Calu3 (cell line): ENCODE measurements at regions of chr12 and their contacts with region 1.

Region 1: GRCh38 chr12:88153959-88154358 is 11.9 kb downstream of the TMTC3 start:
- DNase-seq: peak; percentile 16
- H3K4me3 Mint-ChIP-seq: no peak overlapping the region
- H3K27ac Mint-ChIP-seq: no peak overlapping the region
- H3K4me1 Mint-ChIP-seq: no peaks in the 10 kb centered on the region
- H3K27me3 Mint-ChIP-seq: no peaks in the 10 kb centered on the region
- CTCF ChIP-seq: peak; percentile 54

Region 2: DNA sequence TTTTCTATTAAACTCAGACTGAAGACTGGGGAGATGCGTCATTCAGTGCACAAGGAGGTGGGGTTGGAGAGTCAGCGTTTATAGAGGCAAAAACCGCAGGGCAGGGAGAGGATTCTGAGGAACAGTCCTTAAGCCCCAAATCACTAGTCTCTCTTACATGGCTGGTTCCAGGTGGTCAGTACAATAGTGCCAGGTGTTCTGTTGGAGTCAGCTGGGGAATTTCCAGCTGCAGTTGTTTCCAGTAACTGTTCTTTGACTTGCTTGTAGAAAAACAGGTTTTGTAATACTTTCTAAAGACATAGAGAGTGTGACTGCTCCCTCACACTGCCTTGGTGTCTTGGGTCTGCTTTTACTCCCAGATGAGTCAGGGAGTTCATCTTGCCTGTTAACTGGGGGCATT is 180.3 kb after region 1 on chr12:
- CTCF ChIA-PET with region 1: no interaction called
- intact Hi-C with region 1: no loop called
- DNase-seq: peak; percentile 36
- H3K4me3 Mint-ChIP-seq: no peak overlapping the region
- H3K27ac Mint-ChIP-seq: no peak overlapping the region
- H3K4me1 Mint-ChIP-seq: peaks cover 24% of the 10 kb centered on the region
- H3K27me3 Mint-ChIP-seq: no peaks in the 10 kb centered on the region
- CTCF ChIP-seq: no peak

Region 3: DNA sequence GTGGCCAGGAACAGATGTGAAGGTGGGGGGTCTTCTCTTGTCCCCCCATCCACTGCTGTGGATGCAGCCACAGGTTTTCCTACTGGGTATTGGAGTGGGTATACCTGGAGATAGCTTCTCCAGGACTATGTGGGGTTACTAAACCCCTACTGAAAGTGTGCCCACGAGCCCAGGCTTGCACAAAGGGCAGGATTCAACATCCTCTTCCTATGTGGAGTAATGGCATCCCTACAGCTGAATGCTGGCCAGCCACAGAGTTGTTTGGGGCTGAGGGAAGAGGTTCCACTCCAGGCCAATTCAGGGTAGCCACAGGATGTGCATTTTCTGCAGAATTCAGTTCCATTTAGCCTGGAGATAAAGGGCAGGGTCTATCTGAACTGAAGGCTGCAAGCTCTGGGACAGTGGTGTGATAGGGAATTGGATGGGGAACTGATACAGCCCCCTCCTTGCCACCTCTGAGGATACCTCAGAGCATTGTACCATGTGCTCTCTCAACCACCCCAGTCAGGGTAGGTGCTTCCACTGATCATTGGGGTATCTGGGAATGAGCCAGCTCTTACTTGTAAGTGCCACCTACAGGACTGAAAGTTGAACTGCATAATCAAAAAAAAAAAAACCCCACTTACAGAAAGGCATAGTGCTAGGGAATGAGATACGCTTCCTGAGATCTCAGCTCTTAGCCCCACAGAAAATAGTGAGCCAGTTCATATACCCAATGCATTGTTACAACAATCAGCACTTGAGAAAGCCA is 239.2 kb after region 1 on chr12:
- CTCF ChIA-PET with region 1: no interaction called
- intact Hi-C with region 1: loop called (anchors 5 kb)
- DNase-seq: peak; percentile 14
- H3K4me3 Mint-ChIP-seq: no peak overlapping the region
- H3K27ac Mint-ChIP-seq: no peak overlapping the region
- H3K4me1 Mint-ChIP-seq: no peaks in the 10 kb centered on the region
- H3K27me3 Mint-ChIP-seq: no peaks in the 10 kb centered on the region
- CTCF ChIP-seq: peak; percentile 57

Region 4: DNA sequence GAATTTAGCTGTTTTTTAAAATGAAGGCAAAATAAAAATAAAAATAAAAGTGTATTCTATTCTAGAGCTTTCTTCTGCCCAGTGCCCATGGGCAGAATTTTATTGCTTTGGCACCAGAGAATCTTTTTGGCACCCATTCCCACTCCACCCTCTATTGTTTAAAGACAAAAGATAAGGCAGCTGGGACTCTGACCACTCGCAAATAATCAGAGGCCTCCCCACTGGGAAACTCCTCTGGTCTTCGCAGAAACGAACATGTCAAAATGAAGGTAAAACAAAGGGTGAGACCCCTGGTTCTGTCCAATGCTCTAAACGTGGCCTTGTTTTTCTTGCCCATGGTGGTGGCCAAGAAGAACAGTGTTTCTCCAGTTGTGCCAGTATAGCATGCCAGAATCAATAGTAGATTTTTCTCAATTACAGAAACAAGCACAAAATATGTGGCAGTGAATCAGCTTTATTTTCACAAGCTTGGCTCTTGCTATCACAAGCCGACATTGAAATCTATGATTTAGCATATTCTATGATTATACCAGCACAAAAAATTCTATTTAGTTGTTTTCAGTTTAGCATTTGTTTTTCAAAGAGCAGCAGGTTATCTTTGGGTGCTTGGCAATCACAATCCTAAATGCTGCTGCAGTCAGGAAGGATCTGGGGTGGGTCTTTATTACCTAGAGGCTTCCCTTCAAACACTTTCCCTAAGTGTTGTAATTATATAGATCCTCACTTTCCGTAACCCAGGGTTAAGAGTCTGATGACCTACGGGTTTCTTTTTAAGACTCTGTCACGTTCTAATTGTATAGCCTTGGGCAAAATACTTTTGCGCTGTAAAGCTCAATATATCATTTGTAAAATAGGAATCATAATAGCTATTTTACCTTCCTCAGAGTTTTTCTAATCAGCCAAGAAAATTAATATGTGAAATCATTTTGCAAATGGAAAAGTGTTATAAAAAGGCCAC is 375.9 kb after region 1 on chr12:
- CTCF ChIA-PET with region 1: no interaction called
- intact Hi-C with region 1: no loop called
- DNase-seq: no peak
- H3K4me3 Mint-ChIP-seq: no peak overlapping the region
- H3K27ac Mint-ChIP-seq: no peak overlapping the region
- H3K4me1 Mint-ChIP-seq: no peaks in the 10 kb centered on the region
- H3K27me3 Mint-ChIP-seq: no peaks in the 10 kb centered on the region
- CTCF ChIP-seq: no peak

Region 5: DNA sequence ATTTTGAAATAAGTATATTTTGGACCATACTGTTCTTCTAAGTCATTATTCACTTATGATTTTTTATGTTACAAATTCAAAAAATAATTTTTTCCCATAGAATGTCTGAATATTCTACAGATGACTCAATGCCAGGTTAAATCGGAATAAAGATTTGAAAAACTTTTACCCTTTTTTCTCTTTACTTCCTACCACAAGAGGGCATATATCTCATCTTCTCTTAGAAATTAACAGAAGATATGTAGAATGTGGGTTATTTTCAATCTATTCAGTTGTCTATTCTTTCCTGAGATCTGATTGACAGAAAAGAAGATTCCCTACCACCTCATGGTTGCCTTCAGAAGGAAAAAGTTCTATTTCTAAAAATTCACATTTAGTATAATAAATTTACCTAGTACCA is 479.4 kb after region 1 on chr12:
- CTCF ChIA-PET with region 1: no interaction called
- intact Hi-C with region 1: loop called (anchors 5 kb)
- DNase-seq: no peak
- H3K4me3 Mint-ChIP-seq: no peak overlapping the region
- H3K27ac Mint-ChIP-seq: no peak overlapping the region
- H3K4me1 Mint-ChIP-seq: peaks cover under 1% of the 10 kb centered on the region
- H3K27me3 Mint-ChIP-seq: no peaks in the 10 kb centered on the region
- CTCF ChIP-seq: no peak